Activated CD8-positive, alpha-beta T cell treated with anti-CD3 and anti-CD28 coated beads, Interleukin-2, amount 10 ng/mL, durations not matched to agents 7 days and 5 days (primary cell): ENCODE measurements at regions of chr16 and their contacts with region 1.

Region 1: DNA sequence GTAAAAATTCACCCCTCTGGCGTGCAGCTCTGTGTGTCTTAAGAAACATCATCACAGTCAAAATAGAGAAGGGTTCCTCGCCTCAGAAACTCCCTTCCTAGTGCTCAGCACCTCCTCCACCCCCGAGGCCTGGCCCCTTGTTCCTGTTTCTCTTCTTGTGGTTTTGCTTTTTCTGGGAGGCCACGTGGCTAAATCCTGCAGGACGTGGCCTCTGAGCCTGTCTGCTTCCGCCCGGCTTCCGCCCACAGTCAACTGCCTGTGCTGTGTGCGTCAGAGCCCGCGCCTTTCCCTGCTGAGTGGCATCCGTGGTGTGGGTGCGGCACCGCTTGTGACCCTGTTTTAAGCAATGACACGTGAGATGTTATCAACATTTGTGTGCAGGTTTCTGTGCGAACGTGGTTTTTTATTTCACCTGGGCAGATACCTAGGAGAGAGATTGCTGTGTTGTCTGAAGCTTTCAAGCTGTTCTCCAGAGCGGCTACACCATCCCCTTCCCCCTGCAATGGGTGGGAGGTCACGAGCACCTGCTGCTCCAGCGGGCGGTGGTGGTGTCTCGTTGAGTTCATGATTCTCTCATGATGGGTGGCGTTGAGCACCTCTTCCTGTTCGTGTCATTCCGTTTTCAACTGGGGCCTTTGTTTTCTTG is 21.7 kb downstream of the ACSF3 start:
- DNase-seq: peak; percentile 93
- ATAC-seq: peak; percentile 97
- H3K4me3 Mint-ChIP-seq: peak overlapping the region; percentile 71
- H3K27ac Mint-ChIP-seq: peak overlapping the region; percentile 95
- H3K4me1 Mint-ChIP-seq: peaks cover 37% of the 10 kb centered on the region
- H3K27me3 Mint-ChIP-seq: no peaks in the 10 kb centered on the region

Region 2: GRCh38 chr16:89096768-89097391 is 18.5 kb before region 1 on chr16:
- CTCF ChIA-PET with region 1: interaction called, 8 read pairs
- POLR2A ChIA-PET with region 1: interaction called, 24 read pairs
- DNase-seq: peak; percentile 88
- ATAC-seq: peak; percentile 77
- H3K4me3 Mint-ChIP-seq: peak overlapping the region; percentile 68
- H3K27ac Mint-ChIP-seq: peak overlapping the region; percentile 96
- H3K4me1 Mint-ChIP-seq: peaks cover 81% of the 10 kb centered on the region
- H3K27me3 Mint-ChIP-seq: peaks cover 4% of the 10 kb centered on the region